ENCODE measurements at regions of chr3 and their contacts with region 1.

Region 1: DNA sequence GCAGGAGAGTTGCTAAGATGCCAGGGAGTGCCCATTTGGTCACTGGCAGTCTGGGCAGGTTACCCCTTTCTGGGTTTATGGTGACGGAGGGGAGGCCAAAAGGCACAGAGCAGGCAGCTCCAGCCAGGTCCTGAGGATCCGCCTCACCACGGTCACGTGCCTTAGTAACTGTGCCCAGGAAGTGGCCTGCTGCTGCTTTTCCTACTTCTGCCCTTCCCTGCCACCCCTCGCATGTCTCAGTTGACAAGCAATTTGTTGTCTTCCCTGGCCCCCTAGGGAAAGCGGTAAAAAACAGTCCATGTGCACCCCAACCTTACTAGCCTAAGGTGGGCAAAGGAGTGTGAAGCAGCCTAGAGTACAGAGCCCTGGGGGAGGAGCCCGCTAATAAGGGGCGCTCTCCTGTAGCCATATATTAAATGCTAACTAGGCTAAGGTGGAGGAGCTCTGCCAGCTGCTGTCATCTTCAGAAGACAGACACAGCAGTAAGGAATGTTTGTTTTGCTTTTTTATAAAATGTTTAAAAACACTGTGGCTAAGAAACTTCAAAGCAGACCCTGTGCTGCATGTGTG is 9.1 kb upstream of the LIPH start:
- DNase-seq: no peak
- ATAC-seq: no peak
- H3K4me3 ChIP-seq: no peak overlapping the region
- H3K27ac ChIP-seq: no peak overlapping the region
- H3K4me1 ChIP-seq: peaks cover 18% of the 10 kb centered on the region
- H3K27me3 ChIP-seq: no peaks in the 10 kb centered on the region
- CTCF ChIP-seq: no peak
- EP300 ChIP-seq: no peak
- POLR2A ChIP-seq: no peak
- RAD21 ChIP-seq: no peak

Region 2: GRCh38 chr3:185152410-185153210 is 408.8 kb before region 1 on chr3 and contains the start of gene C3orf70:
- CTCF ChIA-PET with region 1: no interaction called
- POLR2A ChIA-PET with region 1: no interaction called
- RAD21 ChIA-PET with region 1: no interaction called
- SMC1A ChIA-PET with region 1: no interaction called
- in situ Hi-C with region 1: no loop called
- intact Hi-C with region 1: no loop called
- DNase-seq: no peak
- ATAC-seq: peak; percentile 53
- H3K4me3 ChIP-seq: peak within 1 kb of the TSS; percentile 68
- H3K27ac ChIP-seq: no peak within 1 kb of the TSS
- H3K4me1 ChIP-seq: no peaks in the 10 kb centered on the region
- H3K27me3 ChIP-seq: peaks cover 5 to 20% of the 10 kb centered on the region in 2 experiments
- CTCF ChIP-seq: no peak
- EP300 ChIP-seq: no peak
- POLR2A ChIP-seq: peak; percentile 33; the same call in 1 of the 2 replicates
- RAD21 ChIP-seq: no peak
- polyA plus RNA-seq, gene C3orf70: not detected

Region 3: DNA sequence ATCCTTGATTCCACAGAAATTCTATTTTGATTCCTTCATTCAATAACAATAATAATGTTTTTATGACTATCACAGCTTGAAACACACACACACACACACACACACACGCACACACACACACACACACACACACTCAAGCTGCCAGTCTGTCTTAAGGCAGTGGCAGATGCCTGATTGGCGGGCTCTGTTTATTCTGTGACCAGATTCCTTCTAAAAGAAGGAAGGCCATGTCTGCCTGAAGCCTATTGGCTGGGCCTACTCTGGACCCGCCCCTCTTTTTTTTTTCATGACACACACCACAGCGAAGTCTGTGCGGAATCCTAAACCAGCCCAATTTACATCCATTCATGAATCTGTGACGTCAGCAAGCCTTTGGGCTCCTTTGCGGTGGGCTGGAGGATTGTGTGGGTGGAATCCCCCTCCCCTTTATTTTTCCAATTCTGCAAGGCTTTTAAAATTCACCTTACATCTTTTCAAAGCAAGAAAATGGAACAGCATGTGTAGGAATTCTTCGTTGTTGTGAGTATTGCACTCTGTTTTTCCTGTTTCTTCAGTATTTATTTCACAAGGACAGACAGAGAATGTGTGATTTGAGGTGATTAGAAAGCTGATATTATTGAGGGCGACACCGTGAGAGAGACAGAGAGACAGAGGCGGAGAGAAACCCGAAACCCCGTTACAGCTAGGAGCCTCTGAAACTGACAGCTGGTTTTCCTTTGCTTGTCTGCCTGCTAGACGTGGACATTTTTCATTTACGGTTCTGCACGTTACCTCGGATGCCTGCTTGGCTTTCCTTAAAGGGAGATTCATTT is 198.4 kb before region 1 on chr3 and contains the start of gene MAP3K13:
- CTCF ChIA-PET with region 1: interaction called, 20 read pairs
- POLR2A ChIA-PET with region 1: no interaction called
- RAD21 ChIA-PET with region 1: interaction called, 7 read pairs
- SMC1A ChIA-PET with region 1: interaction called, 13 read pairs
- in situ Hi-C with region 1: no loop called
- intact Hi-C with region 1: no loop called
- DNase-seq: peak; percentile 81
- ATAC-seq: peak; percentile 99
- H3K4me3 ChIP-seq: peak within 1 kb of the TSS; percentile 69
- H3K27ac ChIP-seq: peak within 1 kb of the TSS; percentile 66
- H3K4me1 ChIP-seq: peaks cover 8% of the 10 kb centered on the region; the same call in 1 of the 2 replicates
- H3K27me3 ChIP-seq: no peaks in the 10 kb centered on the region
- CTCF ChIP-seq: no peak
- EP300 ChIP-seq: no peak
- POLR2A ChIP-seq: peak; percentile 54; the same call in 1 of the 2 replicates
- RAD21 ChIP-seq: no peak
- polyA plus RNA-seq, gene MAP3K13: 46.6 to 70.8 TPM

Region 4: DNA sequence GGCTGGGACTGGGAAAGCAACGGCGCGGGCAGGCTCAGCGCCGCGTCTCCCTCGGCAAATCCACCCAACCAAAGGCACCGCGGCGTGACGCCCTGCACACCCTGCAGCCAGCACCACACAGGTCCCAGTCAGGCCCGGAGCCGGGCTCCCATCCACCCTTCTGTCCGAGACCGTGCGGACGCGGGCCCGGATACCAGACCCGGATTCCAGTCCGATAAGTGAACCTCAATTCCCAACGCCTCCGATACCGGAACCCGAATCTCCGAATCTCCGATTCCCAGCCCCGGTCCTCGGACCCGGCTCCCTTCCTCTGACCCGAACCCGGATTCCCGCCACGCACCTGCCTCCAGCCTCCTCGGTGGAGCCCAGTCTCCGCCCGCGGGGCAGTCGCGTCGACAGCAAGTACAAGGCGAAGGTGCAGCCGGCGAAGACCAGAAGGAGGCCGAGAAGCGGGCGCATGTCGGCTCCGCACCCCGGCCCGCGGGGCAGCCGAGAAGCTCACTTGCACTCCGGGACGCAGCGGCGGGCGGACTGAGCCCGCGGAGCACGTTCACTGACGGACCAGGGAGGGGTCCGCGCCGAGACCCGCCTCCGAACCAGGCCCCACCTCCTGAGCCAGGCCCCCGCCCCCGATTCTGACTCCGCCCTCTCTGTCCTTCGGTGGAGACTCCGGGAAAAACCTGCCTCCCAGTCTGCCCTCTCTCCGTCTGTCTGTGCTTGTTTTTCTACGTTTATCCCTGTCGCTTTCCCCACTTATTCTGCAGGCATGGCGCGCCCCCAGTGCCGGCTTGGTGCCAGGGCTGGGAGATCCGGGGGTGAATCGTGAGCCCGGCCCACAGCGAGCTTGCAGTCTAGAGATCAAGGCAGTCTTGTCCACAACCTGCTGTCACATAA is 62.7 kb before region 1 on chr3 and contains the start of gene TMEM41A:
- CTCF ChIA-PET with region 1: interaction called, 6 read pairs
- POLR2A ChIA-PET with region 1: interaction called, 4 read pairs
- RAD21 ChIA-PET with region 1: interaction called, 11 read pairs
- SMC1A ChIA-PET with region 1: interaction called, 9 read pairs
- in situ Hi-C with region 1: no loop called
- intact Hi-C with region 1: loop called (anchors 1 kb)
- DNase-seq: peak; percentile 53
- ATAC-seq: peak; percentile 98
- H3K4me3 ChIP-seq: peak within 1 kb of the TSS; percentile 92
- H3K27ac ChIP-seq: peak within 1 kb of the TSS; percentile 87
- H3K4me1 ChIP-seq: peaks cover 9% of the 10 kb centered on the region
- H3K27me3 ChIP-seq: no peaks in the 10 kb centered on the region
- CTCF ChIP-seq: no peak
- EP300 ChIP-seq: 0 out of 4 replicates have a peak, but pooled peaks of 1 of the 2 experiments have one; percentile 46
- POLR2A ChIP-seq: peak; percentile 99
- RAD21 ChIP-seq: peak; percentile 14; the same call in 1 of the 2 replicates
- polyA plus RNA-seq, gene TMEM41A: 13.9 to 16.9 TPM

Region 5: DNA sequence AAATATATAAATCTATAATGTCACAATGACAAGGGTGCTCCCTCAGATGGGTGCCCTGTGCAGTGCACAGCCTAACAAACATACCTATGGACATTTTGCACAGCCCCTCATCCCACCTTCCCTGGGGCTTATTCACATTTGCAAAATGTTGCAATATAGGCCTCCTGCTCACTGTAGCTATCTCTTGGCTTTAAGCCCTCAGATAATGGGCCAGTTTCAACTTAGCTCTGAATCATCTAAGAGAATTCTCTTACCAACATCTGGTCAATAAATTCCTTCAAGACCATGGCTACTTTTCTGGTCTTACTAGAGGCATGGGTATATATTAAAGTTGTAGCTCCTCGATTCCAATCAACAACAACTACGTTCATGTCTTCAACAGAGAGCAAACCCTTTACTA is 26.9 kb before region 1 on chr3:
- CTCF ChIA-PET with region 1: interaction called, 20 read pairs
- POLR2A ChIA-PET with region 1: no interaction called
- RAD21 ChIA-PET with region 1: interaction called, 4 read pairs
- SMC1A ChIA-PET with region 1: interaction called, 9 read pairs
- in situ Hi-C with region 1: no loop called
- intact Hi-C with region 1: no loop called
- DNase-seq: no peak
- ATAC-seq: no peak
- H3K4me3 ChIP-seq: no peak overlapping the region
- H3K27ac ChIP-seq: no peak overlapping the region
- H3K4me1 ChIP-seq: peaks cover 12% of the 10 kb centered on the region
- H3K27me3 ChIP-seq: no peaks in the 10 kb centered on the region
- CTCF ChIP-seq: no peak
- EP300 ChIP-seq: no peak
- POLR2A ChIP-seq: no peak
- RAD21 ChIP-seq: no peak

Region 6: DNA sequence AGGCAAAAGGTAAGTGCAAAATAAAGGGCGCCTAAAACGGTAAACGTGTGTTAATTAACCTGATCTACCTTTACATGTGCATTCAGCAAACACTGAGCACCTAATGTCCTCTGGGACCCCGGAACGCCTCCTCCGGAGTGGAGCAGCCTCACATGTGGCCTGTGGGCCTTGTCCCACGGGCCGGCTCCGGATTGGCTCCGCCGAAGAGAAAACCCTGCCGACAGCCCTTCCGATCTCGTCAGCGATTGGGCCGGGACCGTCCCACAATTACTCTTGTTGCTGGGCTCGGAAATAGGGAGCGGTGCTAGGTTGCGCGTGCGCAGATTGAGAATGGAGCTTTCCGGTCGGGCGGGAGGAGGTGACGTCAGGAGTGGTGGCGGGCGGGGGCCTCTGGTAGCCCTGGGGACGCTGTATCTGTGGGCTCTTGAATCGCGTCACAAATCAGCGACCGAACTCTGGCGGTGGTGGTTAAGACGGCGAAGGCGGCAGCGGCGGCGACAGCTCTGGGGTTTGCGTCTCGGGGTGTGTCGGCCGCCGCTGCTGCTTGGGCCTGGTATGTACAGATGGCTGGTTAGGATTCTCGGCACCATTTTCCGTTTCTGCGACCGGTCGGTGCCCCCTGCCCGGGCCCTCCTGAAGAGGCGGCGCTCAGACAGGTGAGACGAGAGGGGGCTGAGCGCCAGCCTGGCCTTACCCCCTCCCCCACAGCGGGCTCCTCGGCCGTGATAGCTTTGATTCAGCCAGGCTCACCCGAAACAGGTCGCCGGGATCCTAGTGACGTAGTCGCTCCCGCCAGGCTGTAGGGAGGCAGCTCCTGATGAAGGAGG is 24.6 kb after region 1 on chr3 and contains the start of gene SENP2:
- CTCF ChIA-PET with region 1: interaction called, 15 read pairs
- POLR2A ChIA-PET with region 1: interaction called, 4 read pairs
- RAD21 ChIA-PET with region 1: interaction called, 4 read pairs
- SMC1A ChIA-PET with region 1: interaction called, 9 read pairs
- in situ Hi-C with region 1: no loop called
- intact Hi-C with region 1: no loop called
- DNase-seq: peak; percentile 97
- ATAC-seq: peak; percentile 99
- H3K4me3 ChIP-seq: peak within 1 kb of the TSS; percentile 90
- H3K27ac ChIP-seq: peak within 1 kb of the TSS; percentile 87
- H3K4me1 ChIP-seq: peaks cover 18% of the 10 kb centered on the region
- H3K27me3 ChIP-seq: no peaks in the 10 kb centered on the region
- CTCF ChIP-seq: no peak
- EP300 ChIP-seq: peak in 1 of 2 experiments; percentile 59; a peak in 1 of 4 replicates
- POLR2A ChIP-seq: peak; percentile 93
- RAD21 ChIP-seq: no peak
- polyA plus RNA-seq, gene SENP2: 9.0 to 9.7 TPM

Measured in GM12878 (cell line).